ENCODE measurements at regions of chr15 and their contacts with region 1.

Region 1: GRCh38 chr15:71730277-71731144 is 79.8 kb upstream of the NR2E3 start:
- DNase-seq: no peak
- H3K4me3 ChIP-seq: no peak overlapping the region
- H3K27ac ChIP-seq: peak overlapping the region; percentile 63
- H3K4me1 ChIP-seq: peaks cover 31% of the 10 kb centered on the region
- H3K27me3 ChIP-seq: no peaks in the 10 kb centered on the region
- CTCF ChIP-seq: peak; percentile 57 to 81 (median 59)
- POLR2A ChIP-seq: no peak

Region 2: DNA sequence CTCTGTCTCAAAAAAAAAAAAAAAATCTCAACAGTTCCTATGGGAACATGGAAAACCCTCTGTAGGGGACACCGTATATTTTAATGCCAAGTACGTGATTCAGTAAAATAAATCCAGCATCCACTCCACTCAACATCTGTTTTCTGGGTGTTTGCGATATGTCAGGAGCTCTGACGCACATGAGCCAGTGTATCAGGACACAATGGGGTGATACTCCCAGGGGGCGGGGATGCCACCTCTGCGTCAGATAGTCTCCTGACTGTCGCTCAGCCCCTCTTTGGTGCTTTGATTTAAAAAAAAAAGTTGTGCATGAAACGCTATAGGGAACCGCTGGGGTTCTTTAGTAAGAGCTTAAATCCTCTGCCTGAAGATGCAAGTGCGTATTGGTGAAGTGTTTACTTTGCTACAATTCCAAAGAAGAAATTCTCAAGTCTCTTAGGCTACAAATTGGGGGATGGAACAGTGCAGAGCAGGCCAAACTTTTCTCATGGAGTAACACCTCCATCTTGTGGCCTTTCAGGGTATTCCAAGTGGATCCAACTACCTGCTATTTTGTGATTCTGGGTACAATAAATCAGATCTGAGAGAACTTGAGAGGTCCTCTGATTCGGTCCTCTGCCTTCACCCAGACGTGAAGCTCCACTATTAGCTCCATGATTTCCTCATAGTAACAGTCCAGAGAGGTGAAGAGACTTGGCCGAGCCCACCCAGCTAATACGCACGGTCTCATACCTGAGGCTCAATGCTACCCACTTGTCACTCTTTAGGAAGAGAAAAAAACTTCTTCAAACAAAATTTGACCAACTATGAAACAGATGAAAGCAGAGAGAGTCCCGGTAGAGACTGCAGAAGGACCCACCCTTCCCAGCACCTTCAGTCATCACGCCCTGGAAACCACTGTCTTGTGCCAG is 70.6 kb after region 1 on chr15:
- intact Hi-C with region 1: loop called (anchors 10 kb)
- DNase-seq: no peak
- H3K4me3 ChIP-seq: no peak overlapping the region
- H3K27ac ChIP-seq: no peak overlapping the region
- H3K4me1 ChIP-seq: no peaks in the 10 kb centered on the region
- H3K27me3 ChIP-seq: no peaks in the 10 kb centered on the region
- CTCF ChIP-seq: peak; percentile 76 to 91 (median 80)
- POLR2A ChIP-seq: no peak

Measured in vagina (tissue), 2 donors.